Ascending aorta (tissue), 2 donors: ENCODE measurements at regions of chr1 and their contacts with region 1.

Region 1: GRCh38 chr1:19311959-19312781 is at the starts of genes AKR7A2 and SLC66A1:
- DNase-seq: peak; percentile 78 to 96
- H3K4me3 ChIP-seq: peak within 1 kb of the TSS; percentile 71 to 96
- H3K27ac ChIP-seq: peak within 1 kb of the TSS; percentile 83 to 93
- H3K4me1 ChIP-seq: peaks cover 0 to 13% of the 10 kb centered on the region in 2 donors
- H3K27me3 ChIP-seq: no peaks in the 10 kb centered on the region
- CTCF ChIP-seq: no peak
- total RNA-seq, gene AKR7A2: 53.7 TPM
- total RNA-seq, gene SLC66A1: 11.1 TPM

Region 2: GRCh38 chr1:19199969-19200604 is 112.1 kb before region 1 on chr1:
- intact Hi-C with region 1: no loop called
- DNase-seq: no peak
- H3K4me3 ChIP-seq: no peak overlapping the region
- H3K27ac ChIP-seq: no peak overlapping the region
- H3K4me1 ChIP-seq: peaks cover 12 to 26% of the 10 kb centered on the region in 2 donors
- H3K27me3 ChIP-seq: no peaks in the 10 kb centered on the region
- CTCF ChIP-seq: no peak

Region 3: GRCh38 chr1:19390901-19391595 is 78.9 kb after region 1 on chr1:
- intact Hi-C with region 1: loop called (anchors 2 kb)
- DNase-seq: peak in 1 of 2 donors; percentile 84
- H3K4me3 ChIP-seq: peak overlapping the region; percentile 28 to 54
- H3K27ac ChIP-seq: peak overlapping the region; percentile 77 to 81
- H3K4me1 ChIP-seq: peaks cover 15 to 72% of the 10 kb centered on the region in 2 donors
- H3K27me3 ChIP-seq: no peaks in the 10 kb centered on the region
- CTCF ChIP-seq: peak; percentile 72 to 89 (median 85)

Region 4: DNA sequence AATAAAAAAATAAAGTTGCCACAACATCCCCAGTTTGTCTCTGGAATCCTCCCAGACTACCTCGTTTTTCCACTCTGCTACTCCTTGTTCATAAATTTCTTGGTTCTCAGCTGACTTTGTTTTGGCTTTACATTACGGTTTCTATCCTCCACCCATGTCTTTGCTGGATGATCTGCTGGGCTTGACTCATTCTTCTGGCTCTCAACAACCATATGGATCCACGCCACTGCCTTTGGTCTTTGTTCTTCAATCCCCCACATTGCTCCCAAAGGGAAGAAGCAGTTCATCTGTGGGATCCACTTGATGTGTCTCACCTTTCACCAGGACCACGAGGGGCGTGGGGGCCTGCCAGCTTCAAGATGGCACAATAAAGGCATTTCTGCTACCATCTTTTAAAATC is 264.9 kb after region 1 on chr1:
- intact Hi-C with region 1: no loop called
- DNase-seq: no peak
- H3K4me3 ChIP-seq: no peak overlapping the region
- H3K27ac ChIP-seq: no peak overlapping the region
- H3K4me1 ChIP-seq: no peaks in the 10 kb centered on the region
- H3K27me3 ChIP-seq: no peaks in the 10 kb centered on the region
- CTCF ChIP-seq: no peak

Region 5: DNA sequence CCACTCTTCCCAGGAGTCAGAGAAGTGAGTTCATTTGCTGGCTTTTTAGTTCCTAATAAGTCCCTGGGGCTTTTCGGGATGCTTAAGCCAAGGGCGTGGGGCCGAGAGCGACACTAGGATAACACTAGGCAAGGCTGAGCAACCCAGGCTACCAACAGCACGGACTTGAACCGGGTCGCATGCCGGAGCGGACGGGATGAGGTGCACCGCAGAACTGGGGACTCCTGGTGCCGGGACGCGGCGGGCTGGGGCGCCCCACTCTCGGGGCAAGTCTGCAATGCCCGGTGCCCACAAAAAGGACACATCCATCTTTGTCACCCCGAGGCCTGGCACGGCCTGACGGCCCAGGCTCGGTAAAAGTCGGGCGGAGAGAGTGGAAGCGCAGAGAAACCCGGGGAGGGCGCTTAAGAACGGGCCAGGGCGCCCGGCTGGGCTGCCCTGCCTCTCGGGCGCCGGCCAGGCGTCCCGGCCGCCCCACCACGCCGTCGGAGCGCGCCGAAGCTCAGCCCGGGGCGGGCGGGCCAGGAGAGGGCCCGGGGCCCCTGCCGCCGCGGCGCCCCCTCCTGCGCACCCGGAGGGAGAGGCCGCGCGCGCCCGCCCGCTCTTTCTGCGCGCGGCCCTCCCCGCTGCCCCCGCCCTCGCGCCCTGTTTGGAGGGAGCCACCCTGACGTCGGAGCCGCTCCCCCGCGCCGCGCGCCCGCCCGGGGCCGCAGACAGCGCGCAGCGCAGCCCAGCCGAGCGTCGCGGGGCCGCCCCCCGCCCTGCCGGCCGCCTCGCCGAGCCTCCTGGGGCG is 331.6 kb after region 1 on chr1 and contains the start of gene NBL1:
- intact Hi-C with region 1: loop called (anchors 2 kb)
- DNase-seq: peak in 1 of 2 donors; percentile 81
- H3K4me3 ChIP-seq: peak within 1 kb of the TSS; percentile 67 to 75
- H3K27ac ChIP-seq: peak within 1 kb of the TSS; percentile 90 to 91
- H3K4me1 ChIP-seq: peaks cover 18 to 36% of the 10 kb centered on the region in 2 donors
- H3K27me3 ChIP-seq: no peaks in the 10 kb centered on the region
- CTCF ChIP-seq: no peak
- total RNA-seq, gene NBL1: 157 TPM